H1 (cell line): ENCODE measurements at regions of chr5 and their contacts with region 1.

Region 1: DNA sequence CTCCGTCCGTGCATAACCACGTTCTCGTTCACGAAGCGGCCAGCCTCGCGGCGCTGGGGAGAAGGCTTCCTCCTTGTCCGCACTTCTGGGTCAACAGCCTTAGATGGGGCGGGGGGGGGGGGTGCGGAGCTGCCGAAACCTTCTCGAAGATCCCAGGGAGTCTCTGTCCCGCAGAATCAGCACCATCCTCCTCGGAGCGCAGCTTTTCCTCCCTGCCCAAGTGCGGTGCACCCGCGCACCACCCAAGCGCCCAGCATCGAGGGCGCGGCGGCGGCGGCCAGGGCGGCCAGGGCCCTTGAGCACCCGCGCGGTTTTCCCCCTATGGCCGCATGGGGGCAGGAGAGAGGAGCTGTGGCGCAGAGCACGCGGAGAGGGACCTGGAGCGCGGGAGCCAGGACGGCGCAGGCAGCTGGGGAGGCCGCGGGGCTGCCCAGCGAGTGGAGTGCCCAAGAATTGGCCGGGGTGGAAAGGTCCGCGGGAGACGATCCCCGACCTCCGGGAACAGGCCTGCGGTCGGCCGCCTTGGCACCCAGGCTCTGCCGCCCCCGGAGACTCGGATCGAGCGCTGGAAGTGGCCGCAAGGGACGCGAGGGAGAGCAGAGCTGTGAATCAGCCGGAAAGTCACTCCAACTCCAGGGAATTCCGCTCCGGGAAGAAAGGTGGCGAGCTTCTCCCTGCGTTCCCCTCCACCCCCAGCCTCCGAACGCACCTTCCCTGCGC is 43.1 kb downstream of the TMEM174 start:
- DNase-seq: peak in 1 of 2 experiments; percentile 92
- H3K4me3 ChIP-seq: peak overlapping the region; percentile 41 to 64 (median 60)
- H3K27ac ChIP-seq: no peak overlapping the region
- H3K4me1 ChIP-seq: peaks cover 5 to 26% (median 9%) of the 10 kb centered on the region in 4 experiments
- H3K27me3 ChIP-seq: peaks cover 15 to 42% (median 38%) of the 10 kb centered on the region in 4 experiments
- CTCF ChIP-seq: peak; percentile 67 to 88 (median 81)
- EP300 ChIP-seq: no peak
- POLR2A ChIP-seq: peak in 1 of 2 experiments; percentile 65; a peak in 1 of 3 replicates
- RAD21 ChIP-seq: peak; percentile 47 to 65; a peak in 3 of 4 replicates

Region 2: GRCh38 chr5:73135429-73136054 is 80.5 kb before region 1 on chr5:
- CTCF ChIA-PET with region 1: interaction called, 12 read pairs
- POLR2A ChIA-PET with region 1: no interaction called
- DNase-seq: no peak
- H3K4me3 ChIP-seq: no peak overlapping the region
- H3K27ac ChIP-seq: no peak overlapping the region
- H3K4me1 ChIP-seq: peaks cover 0 to 10% (median 3%) of the 10 kb centered on the region in 4 experiments; a peak in 3 of 7 replicates
- H3K27me3 ChIP-seq: no peaks in the 10 kb centered on the region; a peak in 1 of 7 replicates
- CTCF ChIP-seq: peak in 2 of 3 experiments; percentile 38 to 42; a peak in 2 of 4 replicates
- EP300 ChIP-seq: no peak
- POLR2A ChIP-seq: no peak
- RAD21 ChIP-seq: peak; percentile 41 to 49

Region 3: DNA sequence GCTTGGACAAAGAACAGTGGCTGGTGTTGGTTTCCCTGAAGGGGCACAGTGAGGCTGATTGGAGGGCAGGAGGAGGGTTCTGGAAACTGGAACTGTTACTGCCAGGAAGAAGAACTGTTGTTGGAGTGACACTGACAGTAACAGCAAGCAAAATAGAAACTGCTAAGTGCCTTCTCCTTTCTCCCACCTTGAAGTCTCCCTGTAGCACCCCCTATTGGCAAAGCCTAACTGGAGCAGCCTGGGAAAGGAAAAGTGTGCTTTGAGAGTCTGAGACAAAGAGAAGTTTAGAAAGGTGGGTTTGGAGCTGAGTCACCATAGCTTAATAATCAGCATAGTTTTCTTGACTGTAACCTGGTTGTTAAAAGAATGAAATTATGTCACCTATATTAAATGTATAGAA is 45.5 kb before region 1 on chr5:
- CTCF ChIA-PET with region 1: interaction called, 37 read pairs
- POLR2A ChIA-PET with region 1: no interaction called
- DNase-seq: peak; percentile 50 to 72
- H3K4me3 ChIP-seq: no peak overlapping the region
- H3K27ac ChIP-seq: no peak overlapping the region
- H3K4me1 ChIP-seq: no peaks in the 10 kb centered on the region
- H3K27me3 ChIP-seq: no peaks in the 10 kb centered on the region
- CTCF ChIP-seq: peak; percentile 34 to 89 (median 79)
- EP300 ChIP-seq: no peak
- POLR2A ChIP-seq: no peak
- RAD21 ChIP-seq: peak; percentile 64 to 79

Region 4: GRCh38 chr5:73201547-73202513 is 14.2 kb before region 1 on chr5:
- CTCF ChIA-PET with region 1: interaction called, 68 read pairs
- POLR2A ChIA-PET with region 1: interaction called, 4 read pairs
- DNase-seq: peak; percentile 91 to 99
- H3K4me3 ChIP-seq: no peak overlapping the region
- H3K27ac ChIP-seq: no peak overlapping the region
- H3K4me1 ChIP-seq: peaks cover 0 to 4% (median 2%) of the 10 kb centered on the region in 4 experiments; a peak in 3 of 7 replicates
- H3K27me3 ChIP-seq: peaks cover 0 to 8% (median 5%) of the 10 kb centered on the region in 4 experiments; a peak in 3 of 7 replicates
- CTCF ChIP-seq: peak; percentile 80 to 91 (median 84)
- EP300 ChIP-seq: 0 out of 3 replicates have a peak, but pooled peaks of 1 of the 2 experiments have one; percentile 40
- POLR2A ChIP-seq: no peak
- RAD21 ChIP-seq: peak; percentile 78 to 87

Region 5: DNA sequence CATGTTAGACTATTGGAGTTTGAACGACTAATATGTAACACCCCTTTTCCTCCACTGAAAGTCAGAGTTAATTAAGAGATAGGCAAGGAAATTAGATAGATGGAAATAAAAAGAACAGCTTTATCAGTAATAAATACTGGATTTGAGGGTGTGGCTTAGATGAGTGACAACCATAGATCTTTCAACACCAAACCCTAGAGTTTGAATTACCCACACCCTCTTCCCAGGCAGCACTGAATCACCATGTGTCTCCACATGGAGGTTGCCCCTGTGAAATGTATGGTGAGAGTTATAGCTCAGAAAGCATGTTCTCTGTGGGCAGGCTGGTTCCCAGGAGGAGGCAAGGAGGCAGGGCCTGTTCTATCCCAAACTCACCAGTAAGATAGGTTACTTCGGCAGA is 26.7 kb after region 1 on chr5:
- CTCF ChIA-PET with region 1: interaction called, 17 read pairs
- POLR2A ChIA-PET with region 1: interaction called, 3 read pairs
- DNase-seq: no peak
- H3K4me3 ChIP-seq: no peak overlapping the region
- H3K27ac ChIP-seq: no peak overlapping the region
- H3K4me1 ChIP-seq: peaks cover 0 to 4% (median 0%) of the 10 kb centered on the region in 4 experiments; a peak in 1 of 7 replicates
- H3K27me3 ChIP-seq: peaks cover 0 to 3% (median 0%) of the 10 kb centered on the region in 4 experiments; a peak in 3 of 7 replicates
- CTCF ChIP-seq: no peak
- EP300 ChIP-seq: no peak
- POLR2A ChIP-seq: no peak
- RAD21 ChIP-seq: no peak

Region 6: DNA sequence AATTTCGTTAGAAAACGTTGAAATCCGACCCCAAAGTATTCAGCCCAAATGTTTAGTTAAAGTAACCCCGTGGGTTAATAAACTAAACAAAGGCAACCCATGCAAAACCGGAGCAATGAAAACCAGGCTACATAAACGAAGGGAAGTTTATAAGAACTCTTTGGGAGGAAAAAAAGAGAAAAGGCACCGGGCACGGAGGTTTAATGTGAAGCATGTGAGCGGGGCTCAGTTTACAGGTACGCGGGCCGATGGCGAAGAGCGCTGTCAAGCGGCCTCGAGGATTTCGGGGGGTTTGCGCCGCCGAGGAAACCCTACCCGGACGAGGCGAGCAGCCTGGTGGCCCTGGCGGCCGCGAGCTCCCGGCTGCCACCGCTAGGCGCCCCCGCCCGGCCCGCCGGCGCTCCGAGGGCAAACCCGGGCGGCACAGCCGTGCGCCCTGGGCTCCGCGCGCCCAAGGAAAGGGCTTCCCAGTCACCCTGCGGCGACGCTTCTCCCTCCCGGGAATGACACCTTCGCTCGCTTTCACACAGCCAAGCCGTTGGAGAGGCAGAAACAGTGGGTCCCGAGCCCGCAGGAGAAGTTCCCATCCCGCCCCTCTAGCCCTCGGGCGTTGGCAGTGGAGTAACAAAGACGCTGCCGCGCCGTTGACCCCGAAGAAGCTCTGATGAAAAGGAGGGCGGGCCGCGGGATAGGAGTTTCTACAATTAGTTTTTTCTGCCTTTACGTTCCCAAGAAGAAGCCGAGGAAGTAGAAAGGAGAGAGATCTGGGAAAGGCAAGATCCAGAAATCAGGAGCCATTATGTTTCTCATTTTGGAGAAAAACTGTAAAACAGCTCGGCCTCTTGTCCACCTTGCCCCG is 83.0 kb after region 1 on chr5:
- CTCF ChIA-PET with region 1: interaction called, 53 read pairs
- POLR2A ChIA-PET with region 1: interaction called, 4 read pairs
- DNase-seq: peak in 1 of 2 experiments; percentile 77
- H3K4me3 ChIP-seq: peak overlapping the region; percentile 20 to 54 (median 32); a peak in 6 of 8 replicates
- H3K27ac ChIP-seq: no peak overlapping the region
- H3K4me1 ChIP-seq: peaks cover 12 to 19% (median 15%) of the 10 kb centered on the region in 4 experiments
- H3K27me3 ChIP-seq: peaks cover 77 to 95% (median 94%) of the 10 kb centered on the region in 4 experiments
- CTCF ChIP-seq: peak; percentile 42 to 52 (median 48)
- EP300 ChIP-seq: no peak
- POLR2A ChIP-seq: no peak
- RAD21 ChIP-seq: peak; percentile 3 to 41; a peak in 2 of 4 replicates

Region 7: GRCh38 chr5:73338256-73339050 is 122.4 kb after region 1 on chr5:
- CTCF ChIA-PET with region 1: no interaction called
- POLR2A ChIA-PET with region 1: no interaction called
- DNase-seq: no peak
- H3K4me3 ChIP-seq: no peak overlapping the region
- H3K27ac ChIP-seq: no peak overlapping the region
- H3K4me1 ChIP-seq: peaks cover 0 to 2% (median 0%) of the 10 kb centered on the region in 4 experiments; a peak in 1 of 7 replicates
- H3K27me3 ChIP-seq: no peaks in the 10 kb centered on the region
- CTCF ChIP-seq: no peak
- EP300 ChIP-seq: no peak
- POLR2A ChIP-seq: no peak
- RAD21 ChIP-seq: no peak

Region 8: GRCh38 chr5:73448463-73449136 is 232.5 kb after region 1 on chr5 and contains the start of gene FOXD1:
- CTCF ChIA-PET with region 1: interaction called, 12 read pairs
- POLR2A ChIA-PET with region 1: no interaction called
- DNase-seq: peak in 1 of 2 experiments; percentile 88
- H3K4me3 ChIP-seq: peak within 1 kb of the TSS; percentile 22 to 62 (median 41)
- H3K27ac ChIP-seq: no peak within 1 kb of the TSS
- H3K4me1 ChIP-seq: peaks cover 6 to 19% (median 12%) of the 10 kb centered on the region in 4 experiments
- H3K27me3 ChIP-seq: peaks cover 67 to 94% (median 80%) of the 10 kb centered on the region in 4 experiments
- CTCF ChIP-seq: peak in 1 of 3 experiments; percentile 4; a peak in 1 of 4 replicates
- EP300 ChIP-seq: no peak
- POLR2A ChIP-seq: no peak
- RAD21 ChIP-seq: peak in 1 of 2 experiments; percentile 20; a peak in 1 of 4 replicates
- total RNA-seq, gene FOXD1: 0.73 and 1.1 TPM in 2 replicates